Activated T-helper 1 cell treated with anti-CD3 and anti-CD28 coated beads, Interleukin-12 subunit alpha, Interleukin-12 subunit beta, Interleukin-2, Interleukin-4 antibody, amounts not matched to agents 30 ng/mL and 10 ng/mL and 1 ng/mL, durations not matched to agents 14 hours and 24 hours and 36 hours (primary cell): ENCODE measurements at regions of chr1 and their contacts with region 1.

Region 1: DNA sequence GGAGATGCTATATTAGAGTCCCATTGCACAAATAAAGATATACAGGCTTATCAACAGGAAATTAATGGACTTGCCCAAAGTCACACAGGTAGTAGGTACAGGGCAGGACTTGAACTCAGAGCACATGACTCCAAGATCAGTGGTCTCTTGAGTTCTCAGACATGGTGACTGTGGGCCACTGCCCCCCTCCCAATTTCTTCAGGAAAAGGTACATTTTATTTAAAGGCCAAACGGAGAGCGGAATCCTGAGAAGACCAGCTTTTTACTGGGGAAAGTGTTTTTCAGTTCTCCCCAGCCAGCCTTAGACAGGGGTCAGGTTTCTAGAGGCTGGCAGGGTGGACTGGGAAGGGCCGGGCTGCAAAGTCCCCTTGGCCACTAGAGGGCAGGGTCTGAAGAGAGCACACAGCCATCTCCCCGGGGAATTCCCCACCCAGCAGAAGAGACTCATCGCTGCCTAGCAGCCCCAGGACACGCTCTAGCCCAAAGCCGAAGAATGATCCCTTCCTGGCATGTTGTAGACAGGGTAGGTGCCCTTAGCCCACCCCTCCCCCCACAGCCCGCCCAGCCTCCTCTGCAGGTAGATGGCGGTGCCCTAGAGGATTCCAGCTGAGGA is 29.7 kb downstream of the ACP6 start:
- DNase-seq: peak; percentile 73
- H3K4me3 Mint-ChIP-seq: no peak overlapping the region
- H3K27ac Mint-ChIP-seq: no peak overlapping the region
- H3K4me1 Mint-ChIP-seq: peaks cover 49% of the 10 kb centered on the region
- H3K27me3 Mint-ChIP-seq: no peaks in the 10 kb centered on the region

Region 2: GRCh38 chr1:147172168-147172992 is 468.3 kb before region 1 on chr1 and contains the start of gene PRKAB2:
- intact Hi-C with region 1: loop called (anchors 10 kb)
- DNase-seq: peak; percentile 86
- H3K4me3 Mint-ChIP-seq: peak within 1 kb of the TSS; percentile 96
- H3K27ac Mint-ChIP-seq: peak within 1 kb of the TSS; percentile 94
- H3K4me1 Mint-ChIP-seq: peaks cover 31% of the 10 kb centered on the region
- H3K27me3 Mint-ChIP-seq: peaks cover 2% of the 10 kb centered on the region
- total RNA-seq, gene PRKAB2: 8.0 and 9.3 TPM in 2 replicates

Region 3: GRCh38 chr1:147494998-147495580 is 145.6 kb before region 1 on chr1:
- intact Hi-C with region 1: loop called (anchors 1 kb)
- DNase-seq: peak; percentile 60
- H3K4me3 Mint-ChIP-seq: no peak overlapping the region
- H3K27ac Mint-ChIP-seq: no peak overlapping the region
- H3K4me1 Mint-ChIP-seq: peaks cover 7% of the 10 kb centered on the region
- H3K27me3 Mint-ChIP-seq: peaks cover 6% of the 10 kb centered on the region

Region 4: DNA sequence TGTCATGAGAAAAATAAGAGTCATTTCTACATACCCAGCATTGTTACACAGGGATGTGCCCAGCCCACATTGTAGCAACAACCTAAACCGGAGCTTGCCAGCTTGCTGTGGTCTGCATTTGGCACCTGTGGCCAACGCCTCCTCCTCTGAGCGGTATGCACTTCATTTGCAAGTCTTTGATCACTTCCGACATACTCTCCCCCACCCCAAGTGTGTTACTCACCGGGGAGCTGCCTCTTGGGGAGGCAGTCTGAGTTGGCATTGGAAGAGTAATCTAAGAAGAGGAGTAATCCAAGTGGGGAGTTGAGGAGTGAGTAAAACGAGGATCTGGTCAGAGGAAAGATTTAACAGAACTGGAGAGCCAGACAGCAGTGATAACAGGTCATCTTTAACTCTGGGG is 95.5 kb before region 1 on chr1:
- intact Hi-C with region 1: loop called (anchors 2 kb)
- DNase-seq: peak; percentile 67
- H3K4me3 Mint-ChIP-seq: peak overlapping the region; percentile 50
- H3K27ac Mint-ChIP-seq: peak overlapping the region; percentile 70
- H3K4me1 Mint-ChIP-seq: peaks cover 20% of the 10 kb centered on the region
- H3K27me3 Mint-ChIP-seq: peaks cover 4% of the 10 kb centered on the region

Region 5: DNA sequence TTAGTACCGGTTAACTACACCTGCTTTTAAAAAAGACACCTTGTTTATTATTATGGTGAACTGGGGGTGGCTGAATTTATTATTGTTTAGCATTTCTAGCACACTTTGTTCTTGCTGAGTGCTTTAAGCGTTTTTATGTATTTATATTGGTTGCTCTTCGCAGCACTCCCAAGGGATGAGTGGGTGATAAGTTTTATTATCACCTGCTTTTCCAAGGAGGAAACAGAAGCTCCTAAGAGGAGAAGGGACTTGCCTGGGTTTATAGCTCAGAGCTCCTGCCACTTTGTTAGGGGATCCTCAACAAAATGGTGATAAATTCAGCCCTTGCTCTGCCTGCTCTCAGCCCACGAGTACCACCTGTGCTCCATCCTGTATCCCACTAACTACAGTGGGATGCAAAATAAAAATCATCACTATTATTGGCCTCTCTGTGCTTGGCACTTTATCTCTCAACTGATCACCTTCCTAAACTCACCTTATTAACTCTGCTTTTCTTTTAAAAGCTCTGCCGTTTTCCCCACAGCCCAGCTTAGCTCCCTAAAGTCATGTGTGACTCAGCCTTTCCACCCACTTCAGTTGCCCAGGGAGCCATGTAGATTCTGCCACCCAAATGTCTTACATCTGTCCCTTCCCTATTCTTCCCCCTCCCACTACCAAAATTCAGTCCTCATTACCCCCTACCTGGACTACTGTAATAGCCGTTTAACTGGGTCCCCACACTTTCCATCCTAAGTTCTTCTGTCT is 54.8 kb before region 1 on chr1:
- intact Hi-C with region 1: no loop called
- DNase-seq: no peak
- H3K4me3 Mint-ChIP-seq: no peak overlapping the region
- H3K27ac Mint-ChIP-seq: no peak overlapping the region
- H3K4me1 Mint-ChIP-seq: no peaks in the 10 kb centered on the region
- H3K27me3 Mint-ChIP-seq: peaks cover 20% of the 10 kb centered on the region

Region 6: DNA sequence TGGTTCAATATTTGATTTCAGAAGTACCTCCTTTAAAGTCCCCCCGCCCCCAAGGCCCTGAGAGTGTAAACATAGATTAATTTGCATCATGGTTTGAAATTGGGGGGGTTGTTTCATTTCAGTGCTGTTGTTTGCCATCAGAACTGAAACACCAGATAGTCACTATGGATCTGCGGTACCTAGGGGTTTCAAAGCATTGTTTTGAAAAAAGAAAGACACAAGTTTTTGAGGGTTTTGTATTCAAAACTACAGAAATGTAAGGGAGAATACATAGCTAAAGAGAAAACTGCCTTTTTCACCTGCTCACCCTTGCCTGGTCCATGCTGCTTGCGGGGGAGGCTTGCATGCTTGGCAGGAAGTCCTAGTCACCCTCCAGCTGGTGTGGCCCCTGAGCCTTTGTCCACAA is 29.6 kb before region 1 on chr1:
- intact Hi-C with region 1: no loop called
- DNase-seq: no peak
- H3K4me3 Mint-ChIP-seq: no peak overlapping the region
- H3K27ac Mint-ChIP-seq: no peak overlapping the region
- H3K4me1 Mint-ChIP-seq: peaks cover 14% of the 10 kb centered on the region
- H3K27me3 Mint-ChIP-seq: no peaks in the 10 kb centered on the region

Region 7: DNA sequence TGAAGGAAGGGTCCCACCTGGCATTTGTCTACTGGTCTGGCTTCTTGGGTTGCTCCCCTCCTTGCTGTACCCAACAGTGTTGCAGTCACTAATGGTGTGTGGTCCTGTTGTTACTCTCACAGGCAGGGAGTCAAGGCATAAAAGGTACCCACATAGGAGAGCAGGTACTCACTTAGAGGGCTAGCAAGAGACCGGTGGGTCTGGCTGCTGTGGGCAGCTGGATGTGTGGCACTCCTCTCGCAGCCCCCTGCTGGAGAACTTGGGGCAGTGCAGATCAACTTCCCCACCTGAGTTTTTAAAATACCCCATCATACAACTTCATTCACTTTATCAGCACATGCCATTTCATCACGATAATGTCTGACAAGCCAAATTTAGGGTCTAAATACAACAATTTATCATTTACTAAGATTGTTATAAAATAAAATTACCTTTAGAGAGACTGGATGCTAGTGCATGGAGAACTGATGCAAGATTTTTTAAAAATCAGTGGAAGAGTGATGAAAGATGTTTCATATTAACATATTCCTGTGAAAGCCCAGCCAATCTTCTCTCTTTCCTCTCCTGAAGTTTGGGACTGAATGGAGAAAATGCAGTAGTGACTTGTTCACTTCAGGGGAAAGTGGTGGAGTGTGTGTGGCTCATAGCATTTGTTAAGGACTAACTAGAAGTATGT is 13.1 kb before region 1 on chr1:
- intact Hi-C with region 1: loop called (anchors 1 kb)
- DNase-seq: peak; percentile 20
- H3K4me3 Mint-ChIP-seq: no peak overlapping the region
- H3K27ac Mint-ChIP-seq: no peak overlapping the region
- H3K4me1 Mint-ChIP-seq: peaks cover 36% of the 10 kb centered on the region
- H3K27me3 Mint-ChIP-seq: no peaks in the 10 kb centered on the region

Region 8: GRCh38 chr1:147651213-147651865 is 10.7 kb after region 1 on chr1:
- intact Hi-C with region 1: no loop called
- DNase-seq: no peak
- H3K4me3 Mint-ChIP-seq: no peak overlapping the region
- H3K27ac Mint-ChIP-seq: no peak overlapping the region
- H3K4me1 Mint-ChIP-seq: peaks cover 34% of the 10 kb centered on the region
- H3K27me3 Mint-ChIP-seq: no peaks in the 10 kb centered on the region

Region 9: DNA sequence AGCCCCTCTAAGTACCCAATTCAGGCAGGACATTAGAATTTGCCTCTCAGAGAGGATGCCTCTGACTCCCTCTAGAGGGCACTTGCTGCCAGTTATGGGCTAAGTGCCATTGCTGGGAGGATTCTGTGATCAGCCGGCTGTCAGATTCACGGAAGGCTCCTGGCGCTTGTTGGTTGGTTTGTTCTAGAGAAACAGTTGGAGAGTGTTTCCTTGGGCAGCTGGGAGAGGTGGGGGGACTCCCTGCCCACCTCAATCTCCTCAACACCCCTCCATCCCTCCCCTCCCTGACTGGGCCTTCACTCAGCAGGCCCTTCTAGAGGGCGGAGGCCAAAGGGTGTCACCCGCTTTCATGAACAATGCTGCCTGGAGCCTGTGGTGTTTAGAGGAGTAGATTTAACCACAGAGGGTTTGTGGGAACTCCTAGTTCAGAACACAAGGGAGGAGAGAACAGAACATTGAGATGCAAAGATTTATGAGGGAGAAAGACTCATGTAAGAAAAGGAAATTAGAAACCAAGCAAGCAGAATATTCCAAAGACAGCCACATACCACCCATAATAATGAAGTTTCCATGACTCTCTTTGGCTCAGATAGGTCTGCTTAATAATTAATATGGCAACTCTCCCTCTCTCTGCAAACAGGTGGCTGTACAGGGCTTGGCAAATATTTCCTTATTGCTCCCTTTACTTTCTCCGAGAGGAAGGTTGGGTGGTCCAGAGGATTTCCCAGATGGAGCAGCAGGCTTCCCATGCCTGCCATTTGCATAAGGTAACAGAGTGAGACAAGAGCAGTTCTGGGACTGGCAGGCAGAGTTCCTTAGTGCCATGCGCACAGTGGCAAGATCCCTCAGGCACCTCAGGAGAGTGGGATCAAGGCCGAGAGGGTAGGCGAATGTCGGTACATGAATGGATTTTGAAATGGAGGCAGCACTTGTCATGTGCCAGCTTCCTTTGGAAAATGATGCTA is 59.7 kb after region 1 on chr1:
- intact Hi-C with region 1: loop called (anchors 1 kb)
- DNase-seq: peak; percentile 45
- H3K4me3 Mint-ChIP-seq: no peak overlapping the region
- H3K27ac Mint-ChIP-seq: no peak overlapping the region
- H3K4me1 Mint-ChIP-seq: peaks cover 9% of the 10 kb centered on the region
- H3K27me3 Mint-ChIP-seq: peaks cover 30% of the 10 kb centered on the region

Region 10: GRCh38 chr1:147723691-147724323 is 83.1 kb after region 1 on chr1:
- intact Hi-C with region 1: no loop called
- DNase-seq: no peak
- H3K4me3 Mint-ChIP-seq: no peak overlapping the region
- H3K27ac Mint-ChIP-seq: no peak overlapping the region
- H3K4me1 Mint-ChIP-seq: no peaks in the 10 kb centered on the region
- H3K27me3 Mint-ChIP-seq: peaks cover 13% of the 10 kb centered on the region